Activated naive CD4-positive, alpha-beta T cell treated with anti-CD3 and anti-CD28 coated beads, Interleukin-2, amount 10 ng/mL, durations not matched to agents 7 days and 5 days (primary cell): ENCODE measurements at regions of chr14 and their contacts with region 1.

Region 1: DNA sequence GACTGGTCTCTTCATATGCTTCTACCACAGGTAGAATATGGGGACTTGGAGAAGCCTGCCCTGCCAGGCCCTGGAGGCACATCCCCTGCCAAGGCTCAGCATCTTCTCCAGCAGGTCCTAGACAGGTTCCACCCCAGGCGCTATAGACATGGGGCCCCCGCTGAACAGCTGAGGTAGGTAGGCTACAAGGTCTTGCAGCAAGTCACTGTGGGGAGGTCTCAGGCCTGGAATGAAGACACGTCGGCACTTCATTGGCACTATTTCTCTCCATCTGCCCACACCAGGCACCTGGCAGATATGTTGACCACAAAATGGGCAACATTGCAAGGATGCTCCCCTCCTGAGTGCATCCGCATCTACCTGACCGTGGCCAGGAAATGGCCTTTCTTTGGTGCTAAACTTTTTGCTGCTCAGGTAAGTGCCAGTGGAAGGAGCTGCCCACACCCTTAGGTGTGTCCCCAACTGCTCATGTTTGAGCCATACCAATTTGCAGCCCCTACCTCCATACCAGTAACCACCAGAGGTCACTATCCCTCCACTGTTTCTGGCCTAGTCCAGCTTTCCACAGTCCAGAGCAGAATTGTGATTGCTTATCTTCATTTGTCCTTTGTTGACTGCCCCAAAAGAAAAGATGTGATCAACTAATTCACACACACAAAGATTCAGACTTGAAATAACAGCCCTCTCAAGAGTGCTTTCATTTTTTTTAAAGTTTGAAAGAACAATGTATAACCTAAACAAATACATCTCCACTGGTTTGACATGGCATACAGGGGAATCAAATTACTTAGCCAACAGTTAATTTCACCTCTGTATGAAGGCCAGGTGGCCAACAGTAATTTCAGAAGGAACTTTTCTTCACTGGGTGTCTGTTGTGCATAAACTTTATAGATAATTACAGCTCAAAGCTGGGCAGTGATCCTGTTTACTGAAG is 16.1 kb downstream of the PIGH start:
- DNase-seq: peak; percentile 55
- H3K4me3 Mint-ChIP-seq: no peak overlapping the region
- H3K27ac Mint-ChIP-seq: no peak overlapping the region
- H3K4me1 Mint-ChIP-seq: peaks cover 12% of the 10 kb centered on the region
- H3K27me3 Mint-ChIP-seq: no peaks in the 10 kb centered on the region

Region 2: DNA sequence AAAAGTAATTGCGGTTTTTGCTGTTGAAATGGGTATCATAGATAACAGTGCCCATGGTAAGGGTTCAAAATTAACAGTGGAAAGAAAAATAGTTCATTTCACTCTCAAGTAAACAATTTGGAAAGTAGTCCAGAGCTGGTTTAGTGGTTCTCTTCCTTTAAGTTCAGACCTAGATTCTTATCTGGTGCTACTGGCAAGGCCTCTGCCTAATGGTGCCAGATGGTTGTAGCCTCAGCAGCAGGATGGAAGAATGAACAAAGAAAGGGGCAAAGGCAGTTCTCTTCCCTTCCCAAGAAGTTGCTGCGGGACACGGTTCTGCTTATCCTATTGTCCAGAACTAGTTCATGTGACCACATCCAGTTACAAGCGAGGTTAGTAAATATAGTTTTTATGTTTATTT is 46.2 kb after region 1 on chr14:
- CTCF ChIA-PET with region 1: no interaction called
- DNase-seq: no peak
- H3K4me3 Mint-ChIP-seq: no peak overlapping the region
- H3K27ac Mint-ChIP-seq: no peak overlapping the region
- H3K4me1 Mint-ChIP-seq: no peaks in the 10 kb centered on the region
- H3K27me3 Mint-ChIP-seq: no peaks in the 10 kb centered on the region

Region 3: DNA sequence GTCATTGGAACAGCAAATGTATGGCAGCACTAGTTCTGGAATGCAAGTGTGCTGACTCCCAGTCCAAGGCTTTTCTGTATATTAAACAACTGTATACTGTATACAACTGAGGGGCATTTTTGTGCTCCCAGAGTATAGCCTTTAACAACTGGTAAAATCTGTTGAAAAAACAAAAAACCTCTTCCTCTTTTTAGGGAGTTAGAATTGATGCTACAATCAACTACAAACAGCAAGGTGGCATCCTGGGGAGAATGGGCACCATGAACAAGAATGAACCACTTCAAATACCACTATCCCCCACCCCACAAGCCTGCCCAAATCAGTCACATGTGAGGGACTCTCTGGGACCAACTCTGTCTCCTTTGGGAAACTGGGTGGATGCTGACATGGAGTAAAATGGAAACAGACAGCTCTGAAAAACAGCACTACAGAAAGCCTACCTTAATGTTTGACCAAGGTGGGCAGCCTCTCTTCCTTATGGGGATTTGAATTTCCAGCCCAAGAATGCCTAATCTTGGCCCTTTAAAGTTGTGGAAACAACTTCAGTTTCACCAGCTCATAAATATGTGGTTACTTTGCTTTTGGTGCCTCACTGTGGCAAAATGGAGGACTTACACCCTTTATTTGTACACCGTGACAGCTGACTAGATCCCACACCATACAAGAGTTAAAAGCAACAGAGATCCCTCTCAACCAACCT is 82.9 kb after region 1 on chr14:
- CTCF ChIA-PET with region 1: interaction called, 14 read pairs
- DNase-seq: peak; percentile 45
- H3K4me3 Mint-ChIP-seq: no peak overlapping the region
- H3K27ac Mint-ChIP-seq: no peak overlapping the region
- H3K4me1 Mint-ChIP-seq: peaks cover 32% of the 10 kb centered on the region
- H3K27me3 Mint-ChIP-seq: no peaks in the 10 kb centered on the region